Ovary (tissue), 10 donors: ENCODE measurements at regions of chr6 and their contacts with region 1.

Region 1: GRCh38 chr6:43105538-43106220 is 29.6 kb downstream of the PTK7 start:
- DNase-seq: peak in 1 of 5 donors; percentile 16
- H3K4me3 ChIP-seq: no peak overlapping the region
- H3K27ac ChIP-seq: no peak overlapping the region
- H3K4me1 ChIP-seq: peaks cover 1% of the 10 kb centered on the region
- H3K27me3 ChIP-seq: no peaks in the 10 kb centered on the region
- CTCF ChIP-seq: no peak
- EP300 ChIP-seq: no peak
- POLR2A ChIP-seq: no peak

Region 2: DNA sequence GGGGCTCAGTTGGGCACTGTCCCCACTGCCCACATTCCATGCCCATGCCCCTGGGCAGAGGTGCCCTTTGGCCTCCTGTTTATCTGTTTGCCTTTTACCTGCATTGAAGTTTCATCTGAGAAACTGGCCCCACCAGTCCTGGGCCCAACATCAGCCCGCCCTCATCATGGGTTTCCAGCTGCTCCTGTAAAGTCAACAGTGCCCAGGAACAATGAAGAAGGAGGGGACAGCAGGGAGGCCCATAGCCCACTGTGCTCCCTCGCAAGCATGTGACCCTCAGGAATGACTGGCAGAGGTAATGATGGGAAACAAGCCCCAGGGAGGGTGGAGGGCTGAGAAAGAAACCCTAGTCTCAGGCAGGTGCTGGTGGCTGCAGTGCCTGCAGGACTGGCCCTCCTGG is 768.6 kb after region 1 on chr6:
- intact Hi-C with region 1: loop called in 1 of 4 experiments (anchors 5 kb)
- DNase-seq: no peak
- H3K4me3 ChIP-seq: no peak overlapping the region
- H3K27ac ChIP-seq: no peak overlapping the region
- H3K4me1 ChIP-seq: no peaks in the 10 kb centered on the region
- H3K27me3 ChIP-seq: no peaks in the 10 kb centered on the region
- CTCF ChIP-seq: no peak
- EP300 ChIP-seq: no peak
- POLR2A ChIP-seq: no peak